AG04450 (cell line): ENCODE measurements at regions of chr9 and their contacts with region 1.

Region 1: DNA sequence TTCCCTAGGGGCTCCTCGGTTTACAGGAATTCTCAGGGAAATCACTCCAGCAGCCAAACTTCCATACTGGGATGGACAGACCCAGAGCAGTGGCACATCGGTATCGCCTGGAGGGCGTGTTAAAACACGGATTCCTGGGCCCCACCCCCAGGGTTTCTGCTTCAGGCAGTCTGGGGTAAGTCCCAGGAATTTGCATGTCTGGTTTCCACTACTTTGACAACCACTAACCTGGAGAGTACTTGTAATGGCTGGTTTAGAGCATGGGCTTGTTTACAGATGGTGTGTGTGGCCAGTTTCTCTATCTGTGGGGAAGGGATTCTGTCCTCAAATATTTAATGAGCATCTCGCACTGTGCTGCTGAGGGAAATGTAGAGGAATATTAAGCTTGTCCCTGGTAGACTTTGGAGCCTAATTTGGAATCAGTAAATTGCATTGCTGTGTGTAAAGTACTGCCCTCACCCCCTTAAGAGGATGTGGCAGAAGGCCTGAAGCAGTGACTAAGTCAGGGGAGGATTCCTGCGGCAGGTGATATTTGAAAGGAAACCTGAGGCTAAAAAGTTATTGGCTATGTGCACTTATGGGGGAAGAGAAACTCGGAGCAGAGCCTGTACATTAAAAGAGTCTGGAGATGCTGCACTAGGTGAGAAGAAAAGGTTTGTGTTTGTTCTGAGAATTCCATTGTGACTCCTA is 18.6 kb upstream of the TJP2 start:
- DNase-seq: no peak
- H3K4me3 ChIP-seq: no peak overlapping the region
- H3K27ac ChIP-seq: no peak overlapping the region
- H3K27me3 ChIP-seq: no peaks in the 10 kb centered on the region
- CTCF ChIP-seq: no peak

Region 2: DNA sequence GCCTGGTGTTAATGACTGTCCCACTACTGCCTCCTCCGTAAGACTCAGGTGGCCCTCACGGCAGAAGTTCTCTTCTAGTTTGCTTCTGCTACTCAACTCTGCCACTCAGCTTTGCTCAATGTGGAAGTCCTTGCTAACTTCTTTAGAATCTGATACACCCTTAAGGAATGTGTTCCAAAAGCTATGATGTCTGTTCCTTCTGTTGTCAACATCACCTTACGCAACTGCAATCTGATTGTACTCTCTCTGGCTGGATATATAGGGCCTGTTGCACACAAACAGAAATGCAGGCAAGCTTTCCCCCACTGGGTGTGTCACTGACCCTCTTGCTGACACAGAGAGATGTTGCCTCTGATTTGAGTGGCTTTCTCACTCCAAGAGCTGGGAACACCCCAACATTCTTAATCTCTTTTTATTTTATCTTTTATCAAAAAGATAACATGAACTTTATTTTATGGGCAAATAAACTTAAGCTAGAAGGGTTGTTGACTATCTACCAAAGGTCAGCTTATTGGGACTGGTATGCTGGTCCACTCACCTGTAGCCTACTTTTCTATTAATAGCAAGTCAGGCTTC is 640.1 kb before region 1 on chr9:
- CTCF ChIA-PET with region 1: no interaction called
- POLR2A ChIA-PET with region 1: no interaction called
- DNase-seq: peak; percentile 26
- H3K4me3 ChIP-seq: no peak overlapping the region
- H3K27ac ChIP-seq: no peak overlapping the region
- H3K27me3 ChIP-seq: no peaks in the 10 kb centered on the region
- CTCF ChIP-seq: no peak

Region 3: DNA sequence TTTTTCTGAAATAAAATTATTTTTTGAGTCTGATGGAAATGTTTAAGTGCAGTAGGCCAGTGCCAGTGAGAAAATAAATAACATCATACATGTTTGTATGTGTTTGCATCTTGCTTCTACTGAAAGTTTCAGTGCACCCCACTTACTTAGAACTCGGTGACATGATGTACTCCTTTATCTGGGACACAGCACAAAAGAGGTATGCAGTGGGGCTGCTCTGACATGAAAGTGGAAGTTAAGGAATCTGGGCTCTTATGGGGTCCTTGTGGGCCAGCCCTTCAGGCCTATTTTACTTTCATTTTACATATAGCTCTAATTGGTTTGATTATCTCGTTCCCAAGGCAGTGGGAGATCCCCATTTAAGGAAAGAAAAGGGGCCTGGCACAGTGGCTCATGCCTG is 80.7 kb before region 1 on chr9:
- CTCF ChIA-PET with region 1: interaction called, 10 read pairs
- POLR2A ChIA-PET with region 1: interaction called, 4 read pairs
- DNase-seq: no peak
- H3K4me3 ChIP-seq: no peak overlapping the region
- H3K27ac ChIP-seq: no peak overlapping the region
- H3K27me3 ChIP-seq: no peaks in the 10 kb centered on the region
- CTCF ChIP-seq: no peak

Region 4: GRCh38 chr9:69168709-69169217 is 13.3 kb after region 1 on chr9:
- CTCF ChIA-PET with region 1: interaction called, 24 read pairs
- POLR2A ChIA-PET with region 1: no interaction called
- DNase-seq: no peak
- H3K4me3 ChIP-seq: no peak overlapping the region
- H3K27ac ChIP-seq: no peak overlapping the region
- H3K27me3 ChIP-seq: no peaks in the 10 kb centered on the region
- CTCF ChIP-seq: no peak

Region 5: DNA sequence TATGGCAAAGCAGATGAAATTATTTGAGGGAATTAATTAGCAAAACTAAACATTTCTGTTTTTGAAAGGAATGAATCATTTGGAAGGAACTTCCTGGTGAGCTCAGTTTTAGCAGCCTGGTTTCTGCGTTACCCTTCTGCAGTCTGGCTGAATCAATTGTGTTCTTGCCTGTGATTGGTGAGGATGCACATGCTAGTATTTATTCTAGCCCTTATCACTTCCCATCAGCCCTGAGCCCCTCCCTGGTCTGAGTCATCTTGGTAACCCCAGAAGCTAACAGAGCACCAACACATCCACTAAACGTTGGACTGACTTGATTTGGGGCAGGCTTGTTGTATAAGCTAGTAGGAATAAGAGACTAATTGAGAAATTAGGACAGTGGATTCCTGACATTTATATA is 25.2 kb after region 1 on chr9:
- CTCF ChIA-PET with region 1: interaction called, 10 read pairs
- POLR2A ChIA-PET with region 1: interaction called, 4 read pairs
- DNase-seq: peak; percentile 92
- H3K4me3 ChIP-seq: no peak overlapping the region
- H3K27ac ChIP-seq: peak overlapping the region; percentile 70
- H3K27me3 ChIP-seq: no peaks in the 10 kb centered on the region
- CTCF ChIP-seq: no peak